K562 (cell line): ENCODE measurements at regions of chr4 and their contacts with region 1.

Region 1: DNA sequence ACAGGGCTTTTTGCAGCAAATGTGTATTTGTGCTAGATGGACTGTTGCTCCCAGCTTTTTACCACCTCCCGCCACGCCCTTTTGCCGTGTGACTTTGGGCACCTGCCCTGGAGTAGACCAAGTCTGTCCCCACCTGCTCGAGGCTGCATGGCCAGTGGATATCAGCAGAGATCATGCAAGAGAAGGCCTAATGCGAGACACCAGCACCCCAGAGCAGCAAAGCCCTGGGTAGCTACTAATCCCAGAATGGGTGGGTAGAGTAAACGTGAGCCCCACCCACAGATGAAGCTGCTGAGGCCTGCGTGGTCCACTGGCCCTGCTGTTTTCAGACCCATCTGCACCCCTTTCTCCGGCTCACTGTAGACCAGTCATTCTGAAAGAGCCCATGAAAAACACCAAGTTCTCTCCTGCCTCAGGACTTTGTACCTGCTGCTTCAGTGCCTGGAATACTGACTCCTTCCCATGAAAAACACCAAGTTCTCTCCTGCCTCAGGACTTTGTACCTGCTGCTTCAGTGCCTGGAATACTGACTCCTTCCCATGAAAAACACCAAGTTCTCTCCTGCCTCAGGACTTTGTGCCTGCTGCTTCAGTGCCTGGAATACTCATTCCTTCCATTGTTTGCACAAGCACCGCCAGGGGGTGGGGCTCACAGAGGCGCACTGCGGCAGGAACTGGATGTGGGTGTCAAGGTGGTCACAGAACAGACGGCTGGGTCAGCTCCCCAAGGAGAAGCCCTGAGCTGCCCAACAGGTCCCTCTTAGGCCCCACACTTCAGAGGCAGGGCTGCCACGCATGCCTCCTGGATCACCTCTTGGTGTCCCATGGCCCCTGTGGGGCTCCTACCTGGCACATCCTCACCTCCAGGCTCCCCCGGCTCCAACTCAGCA is 5.1 kb upstream of the TNIP2 start:
- DNase-seq: peak in 3 of 4 experiments; percentile 41 to 48 (median 45)
- ATAC-seq: peak; percentile 42
- H3K4me3 ChIP-seq: no peak overlapping the region
- H3K27ac ChIP-seq: no peak overlapping the region
- H3K4me1 ChIP-seq: peaks cover 14 to 33% of the 10 kb centered on the region in 2 experiments
- H3K27me3 ChIP-seq: no peaks in the 10 kb centered on the region
- CTCF ChIP-seq: 0 out of 6 replicates have a peak, but pooled peaks of 1 of the 3 experiments have one; percentile 20
- EP300 ChIP-seq: no peak
- POLR2A ChIP-seq: no peak
- RAD21 ChIP-seq: no peak

Region 2: GRCh38 chr4:2371765-2372487 is 389.4 kb before region 1 on chr4:
- CTCF ChIA-PET with region 1: no interaction called
- POLR2A ChIA-PET with region 1: no interaction called
- in situ Hi-C with region 1: no loop called
- intact Hi-C with region 1: no loop called
- DNase-seq: no peak
- ATAC-seq: no peak
- H3K4me3 ChIP-seq: no peak overlapping the region
- H3K27ac ChIP-seq: no peak overlapping the region
- H3K4me1 ChIP-seq: peaks cover 9 to 23% of the 10 kb centered on the region in 2 experiments; a peak in 4 of 5 replicates
- H3K27me3 ChIP-seq: no peaks in the 10 kb centered on the region
- CTCF ChIP-seq: no peak
- EP300 ChIP-seq: no peak
- POLR2A ChIP-seq: no peak
- RAD21 ChIP-seq: no peak

Region 3: GRCh38 chr4:2526559-2526958 is 234.7 kb before region 1 on chr4:
- CTCF ChIA-PET with region 1: no interaction called
- POLR2A ChIA-PET with region 1: no interaction called
- in situ Hi-C with region 1: no loop called
- intact Hi-C with region 1: no loop called
- DNase-seq: no peak
- ATAC-seq: 0 out of 3 replicates have a peak, but pooled peaks have one; percentile 34
- H3K4me3 ChIP-seq: no peak overlapping the region
- H3K27ac ChIP-seq: no peak overlapping the region
- H3K4me1 ChIP-seq: no peaks in the 10 kb centered on the region; a peak in 1 of 5 replicates
- H3K27me3 ChIP-seq: no peaks in the 10 kb centered on the region
- CTCF ChIP-seq: no peak
- EP300 ChIP-seq: no peak
- POLR2A ChIP-seq: no peak
- RAD21 ChIP-seq: no peak

Region 4: GRCh38 chr4:2792711-2793585 is 31.7 kb after region 1 on chr4 and contains the start of gene SH3BP2:
- CTCF ChIA-PET with region 1: no interaction called
- POLR2A ChIA-PET with region 1: interaction called, 4 read pairs
- in situ Hi-C with region 1: no loop called
- intact Hi-C with region 1: loop called (anchors 1 kb)
- DNase-seq: peak; percentile 90 to 97 (median 95)
- ATAC-seq: peak; percentile 83
- H3K4me3 ChIP-seq: peak within 1 kb of the TSS; percentile 50
- H3K27ac ChIP-seq: peak within 1 kb of the TSS; percentile 39; the same call in 2 of the 3 replicates
- H3K4me1 ChIP-seq: peaks cover 15 to 93% of the 10 kb centered on the region in 2 experiments
- H3K27me3 ChIP-seq: no peaks in the 10 kb centered on the region
- CTCF ChIP-seq: no peak
- EP300 ChIP-seq: no peak
- POLR2A ChIP-seq: no peak
- RAD21 ChIP-seq: no peak
- polyA plus RNA-seq, gene SH3BP2: 0.34 to 0.72 TPM

Region 5: DNA sequence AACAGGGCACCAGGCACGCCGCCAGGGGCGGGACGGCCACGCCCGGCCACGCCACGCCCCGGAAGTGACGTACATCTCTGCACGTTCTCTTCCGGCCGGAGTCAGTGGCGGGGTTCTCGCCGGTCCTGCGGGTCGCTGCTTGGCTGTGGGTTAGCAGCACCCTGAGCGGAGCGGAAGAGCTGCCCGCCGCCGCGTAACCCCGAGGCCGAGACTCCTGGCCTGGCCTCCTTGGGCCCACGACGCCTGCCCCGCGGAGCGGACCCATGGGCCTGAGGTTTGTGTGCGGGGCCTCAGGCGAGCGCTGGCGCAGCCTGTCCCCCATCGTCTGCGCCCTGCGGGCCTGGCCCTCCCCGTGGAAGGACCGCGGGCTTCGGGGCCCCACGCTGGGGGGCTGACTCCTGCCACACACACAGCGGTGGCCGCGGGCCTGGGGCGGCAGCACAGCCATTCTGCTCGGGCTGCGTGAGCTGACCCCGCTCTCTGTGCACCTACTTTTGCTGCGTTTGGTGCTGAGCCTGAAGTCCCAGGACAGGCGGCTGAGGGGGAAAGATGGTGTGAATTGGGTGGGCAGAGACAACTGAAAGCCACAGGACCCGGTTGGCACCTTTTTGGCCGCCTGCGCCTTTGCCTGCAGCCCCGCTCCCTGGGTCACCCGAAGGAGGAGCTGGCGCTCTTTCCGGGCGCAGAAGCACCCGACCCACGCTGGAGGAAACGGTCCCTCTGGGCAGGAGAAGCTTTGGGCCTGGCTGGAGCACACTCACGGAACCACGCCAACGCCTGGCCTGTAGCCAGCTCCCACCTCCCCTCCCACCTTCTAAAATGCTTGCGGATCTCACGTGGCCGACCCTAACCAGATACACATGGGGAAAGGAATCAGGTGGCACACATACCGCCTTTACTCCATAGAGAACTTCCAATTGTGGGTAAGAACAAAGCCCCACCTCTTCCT is 173.8 kb after region 1 on chr4:
- CTCF ChIA-PET with region 1: no interaction called
- POLR2A ChIA-PET with region 1: no interaction called
- in situ Hi-C with region 1: no loop called
- intact Hi-C with region 1: loop called (anchors 1 kb)
- DNase-seq: peak in 2 of 4 experiments; percentile 93 to 96
- ATAC-seq: peak; percentile 85
- H3K4me3 ChIP-seq: peak overlapping the region; percentile 84
- H3K27ac ChIP-seq: peak overlapping the region; percentile 68
- H3K4me1 ChIP-seq: peaks cover 17 to 70% of the 10 kb centered on the region in 2 experiments; a peak in 4 of 5 replicates
- H3K27me3 ChIP-seq: no peaks in the 10 kb centered on the region
- CTCF ChIP-seq: peak in 1 of 3 experiments; percentile 1; a peak in 1 of 6 replicates
- EP300 ChIP-seq: no peak
- POLR2A ChIP-seq: peak; percentile 93
- RAD21 ChIP-seq: no peak

Region 6: DNA sequence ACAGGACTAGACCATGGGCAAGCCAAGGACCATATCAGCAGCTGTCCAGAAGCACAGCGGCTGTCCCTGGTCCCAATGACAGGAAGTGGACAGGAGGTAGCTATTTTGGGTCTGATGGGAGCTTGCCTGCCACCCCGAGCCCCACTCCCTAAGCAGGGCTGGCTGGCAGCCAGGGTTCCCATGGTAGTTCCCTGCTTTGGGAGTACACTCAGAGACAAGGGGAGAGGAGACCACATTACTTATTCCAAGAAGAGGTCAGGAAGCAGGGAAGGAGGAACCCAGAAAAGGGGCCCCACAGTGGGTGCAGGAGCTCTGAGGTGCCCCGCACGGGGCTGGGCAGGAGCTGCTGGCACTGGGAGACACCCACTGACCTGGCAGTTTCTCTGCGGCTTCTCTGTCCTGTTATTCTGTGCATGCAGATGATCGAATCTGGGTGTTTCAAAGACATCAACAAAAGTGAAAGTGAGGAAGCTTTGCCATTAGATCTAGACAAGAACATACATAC is 276.7 kb after region 1 on chr4:
- CTCF ChIA-PET with region 1: no interaction called
- POLR2A ChIA-PET with region 1: no interaction called
- in situ Hi-C with region 1: no loop called
- intact Hi-C with region 1: loop called (anchors 5 kb)
- DNase-seq: peak in 1 of 4 experiments; percentile 24
- ATAC-seq: no peak
- H3K4me3 ChIP-seq: no peak overlapping the region
- H3K27ac ChIP-seq: no peak overlapping the region
- H3K4me1 ChIP-seq: peaks cover 0 to 29% of the 10 kb centered on the region in 2 experiments; a peak in 3 of 5 replicates
- H3K27me3 ChIP-seq: peaks cover 62 to 91% of the 10 kb centered on the region in 2 experiments
- CTCF ChIP-seq: no peak
- EP300 ChIP-seq: no peak
- POLR2A ChIP-seq: no peak
- RAD21 ChIP-seq: no peak